HAP-1 (cell line): ENCODE measurements at regions of chr1 and their contacts with region 1.

Region 1: GRCh38 chr1:37807555-37808368 is at the starts of genes C1orf122 and YRDC:
- DNase-seq: peak; percentile 81 to 96
- H3K4me3 ChIP-seq: peak within 1 kb of the TSS; percentile 79
- H3K4me1 ChIP-seq: peaks cover 11% of the 10 kb centered on the region
- H3K27me3 ChIP-seq: no peaks in the 10 kb centered on the region

Region 2: GRCh38 chr1:37859507-37860345 is 52.0 kb after region 1 on chr1 and contains the start of gene MTF1:
- in situ Hi-C with region 1: loop called (anchors 5 kb)
- DNase-seq: peak; percentile 92 to 97
- H3K4me3 ChIP-seq: peak within 1 kb of the TSS; percentile 97
- H3K4me1 ChIP-seq: peaks cover 10% of the 10 kb centered on the region
- H3K27me3 ChIP-seq: no peaks in the 10 kb centered on the region